Calu3 (cell line): ENCODE measurements at regions of chr12 and their contacts with region 1.

Region 1: DNA sequence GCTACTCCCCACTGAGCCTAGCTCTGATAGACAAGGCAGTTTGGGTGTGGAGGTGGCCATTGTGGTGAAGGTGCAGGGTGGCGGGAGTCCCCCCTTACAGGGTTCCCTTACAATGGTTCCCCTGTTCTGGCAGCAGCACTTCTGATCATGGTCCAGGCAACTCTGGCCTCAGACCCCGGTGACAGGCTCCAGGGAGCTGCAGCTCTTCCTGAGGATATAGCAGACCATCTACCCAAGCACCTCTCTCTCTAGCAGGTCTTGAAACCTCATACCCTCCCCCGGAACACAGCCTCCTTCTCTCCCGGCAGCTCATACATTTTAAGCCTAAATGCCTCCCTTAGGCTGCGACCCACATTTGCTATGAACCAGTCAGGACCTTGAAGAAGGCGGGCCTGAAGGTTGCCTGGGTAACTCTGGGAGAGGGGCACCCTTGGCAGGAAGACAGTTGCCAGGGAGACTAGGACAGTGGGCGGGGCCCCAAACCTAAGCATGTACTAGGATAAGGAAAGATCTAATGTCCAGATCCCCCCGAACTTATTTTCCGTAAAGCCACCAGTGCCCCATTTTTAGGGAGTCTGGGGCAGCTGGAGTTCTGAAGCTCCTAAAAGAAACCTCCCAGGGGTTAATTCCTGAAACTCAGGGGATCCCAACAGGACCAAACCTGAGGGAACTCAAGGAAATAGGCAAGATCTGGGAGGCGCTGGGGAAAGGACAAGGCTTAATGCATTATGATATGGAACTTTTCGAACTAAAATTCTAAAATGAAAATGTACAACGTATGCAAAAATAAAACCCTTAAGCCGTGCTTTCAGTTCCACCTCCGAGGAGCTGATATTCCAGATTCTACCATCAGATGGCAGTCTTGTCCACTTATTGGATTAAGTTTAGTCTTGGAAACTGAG is 4.5 kb upstream of the GDF11 start:
- DNase-seq: peak; percentile 86
- H3K4me3 Mint-ChIP-seq: peak overlapping the region; percentile 68
- H3K27ac Mint-ChIP-seq: peak overlapping the region; percentile 42
- H3K4me1 Mint-ChIP-seq: peaks cover 35% of the 10 kb centered on the region
- H3K27me3 Mint-ChIP-seq: peaks cover 21% of the 10 kb centered on the region
- CTCF ChIP-seq: peak; percentile 55

Region 2: DNA sequence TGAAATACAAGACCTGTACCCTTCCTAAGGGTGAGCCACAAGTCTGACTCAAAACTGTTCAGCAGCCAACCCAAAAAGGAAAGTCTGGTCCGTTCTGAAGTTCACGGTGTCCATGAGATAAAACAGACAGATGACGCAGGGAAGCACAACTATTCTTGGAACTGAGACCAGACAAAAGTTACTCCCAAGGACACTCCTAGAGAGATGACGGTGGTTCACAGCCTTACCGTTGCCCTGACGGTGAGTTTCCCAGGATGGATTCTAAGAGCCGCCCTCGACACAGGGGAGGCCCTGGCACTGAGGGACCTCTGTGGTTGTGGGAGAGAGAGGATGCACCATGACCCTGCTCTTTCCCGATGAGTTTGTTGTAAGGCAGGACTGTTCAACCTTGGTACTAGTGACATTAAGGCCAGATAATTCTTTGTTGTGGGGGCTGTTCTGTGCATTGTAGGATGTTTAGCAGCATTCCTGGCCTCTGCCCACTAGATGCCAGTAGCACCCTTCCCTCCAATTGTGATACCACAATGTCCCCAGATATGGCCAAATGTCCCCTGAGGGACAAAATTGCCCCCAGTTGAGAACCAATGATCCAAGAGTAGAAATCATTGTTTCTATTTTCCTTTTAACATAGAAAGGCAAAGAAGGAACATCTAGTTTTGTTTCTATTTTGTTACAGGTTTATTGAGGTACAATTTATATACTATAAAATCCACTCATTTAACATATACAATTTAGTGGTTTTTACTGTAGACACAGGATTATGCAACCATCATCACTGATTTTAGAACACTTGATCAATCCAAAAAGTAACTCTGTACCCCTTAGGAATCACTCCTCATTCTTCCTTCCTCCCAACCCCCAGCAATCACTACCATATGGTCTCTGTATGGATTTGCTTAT is 78.6 kb before region 1 on chr12:
- CTCF ChIA-PET with region 1: interaction called, 4 read pairs
- intact Hi-C with region 1: loop called (anchors 1 kb)
- DNase-seq: peak; percentile 58
- H3K4me3 Mint-ChIP-seq: no peak overlapping the region
- H3K27ac Mint-ChIP-seq: no peak overlapping the region
- H3K4me1 Mint-ChIP-seq: peaks cover 29% of the 10 kb centered on the region
- H3K27me3 Mint-ChIP-seq: peaks cover 4% of the 10 kb centered on the region
- CTCF ChIP-seq: peak; percentile 53

Region 3: GRCh38 chr12:55715833-55716581 is 22.4 kb before region 1 on chr12 and contains the start of gene BLOC1S1:
- CTCF ChIA-PET with region 1: interaction called, 23 read pairs
- intact Hi-C with region 1: no loop called
- DNase-seq: peak; percentile 98
- H3K4me3 Mint-ChIP-seq: peak within 1 kb of the TSS; percentile 86
- H3K27ac Mint-ChIP-seq: peak within 1 kb of the TSS; percentile 97
- H3K4me1 Mint-ChIP-seq: peaks cover 47% of the 10 kb centered on the region
- H3K27me3 Mint-ChIP-seq: peaks cover 27% of the 10 kb centered on the region
- CTCF ChIP-seq: no peak
- total RNA-seq, gene BLOC1S1: 71.0 and 89.4 TPM in 2 replicates

Region 4: GRCh38 chr12:55797068-55797467 is 58.7 kb after region 1 on chr12:
- CTCF ChIA-PET with region 1: interaction called, 7 read pairs
- intact Hi-C with region 1: loop called (anchors 5 kb)
- DNase-seq: no peak
- H3K4me3 Mint-ChIP-seq: no peak overlapping the region
- H3K27ac Mint-ChIP-seq: no peak overlapping the region
- H3K4me1 Mint-ChIP-seq: peaks cover 10% of the 10 kb centered on the region
- H3K27me3 Mint-ChIP-seq: no peaks in the 10 kb centered on the region
- CTCF ChIP-seq: peak; percentile 22

Region 5: GRCh38 chr12:55926738-55927587 is 188.6 kb after region 1 on chr12:
- CTCF ChIA-PET with region 1: interaction called, 9 read pairs
- intact Hi-C with region 1: loop called (anchors 5 kb)
- DNase-seq: peak; percentile 94
- H3K4me3 Mint-ChIP-seq: peak overlapping the region; percentile 95
- H3K27ac Mint-ChIP-seq: peak overlapping the region; percentile 95
- H3K4me1 Mint-ChIP-seq: peaks cover 34% of the 10 kb centered on the region
- H3K27me3 Mint-ChIP-seq: no peaks in the 10 kb centered on the region
- CTCF ChIP-seq: peak; percentile 93

Region 6: DNA sequence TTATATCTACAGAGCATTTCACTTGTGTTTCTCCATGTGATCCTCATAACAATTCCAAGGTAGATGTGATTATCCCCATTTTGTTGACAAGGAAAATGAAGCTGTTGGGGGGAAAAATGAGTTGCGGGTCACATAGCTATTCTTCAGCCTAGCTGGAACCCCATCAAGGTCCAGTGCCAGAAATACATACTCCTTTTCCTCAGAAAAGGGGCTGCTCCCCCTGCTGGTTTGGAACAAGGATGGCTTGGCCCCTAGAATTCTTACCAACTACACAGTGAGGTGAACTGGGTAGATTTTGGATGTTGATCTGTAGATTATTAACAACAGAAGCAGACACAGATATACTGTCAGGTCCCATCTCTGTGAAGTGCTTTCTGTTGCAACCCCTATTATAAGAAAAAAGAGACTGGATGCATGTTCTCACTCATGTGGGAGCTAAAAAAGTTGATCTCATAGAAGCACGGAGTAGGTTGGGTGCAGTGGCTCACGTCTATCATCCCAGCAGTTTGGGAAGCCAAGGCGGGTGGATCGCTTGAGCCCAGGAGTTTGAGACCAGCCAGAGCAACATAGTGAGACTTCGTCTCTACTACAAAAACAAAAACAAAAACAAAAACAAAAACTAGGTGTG is 291.4 kb after region 1 on chr12:
- CTCF ChIA-PET with region 1: interaction called, 15 read pairs
- intact Hi-C with region 1: loop called (anchors 2 kb)
- DNase-seq: peak; percentile 78
- H3K4me3 Mint-ChIP-seq: no peak overlapping the region
- H3K27ac Mint-ChIP-seq: no peak overlapping the region
- H3K4me1 Mint-ChIP-seq: peaks cover 16% of the 10 kb centered on the region
- H3K27me3 Mint-ChIP-seq: no peaks in the 10 kb centered on the region
- CTCF ChIP-seq: peak; percentile 74

Region 7: GRCh38 chr12:56104109-56104814 is 365.9 kb after region 1 on chr12 and contains the start of gene PA2G4:
- CTCF ChIA-PET with region 1: interaction called, 4 read pairs
- intact Hi-C with region 1: loop called (anchors 5 kb)
- DNase-seq: peak; percentile 99
- H3K4me3 Mint-ChIP-seq: peak within 1 kb of the TSS; percentile 96
- H3K27ac Mint-ChIP-seq: peak within 1 kb of the TSS; percentile 95
- H3K4me1 Mint-ChIP-seq: peaks cover 21% of the 10 kb centered on the region
- H3K27me3 Mint-ChIP-seq: no peaks in the 10 kb centered on the region
- CTCF ChIP-seq: no peak
- total RNA-seq, gene PA2G4: 229 and 233 TPM in 2 replicates

Region 8: DNA sequence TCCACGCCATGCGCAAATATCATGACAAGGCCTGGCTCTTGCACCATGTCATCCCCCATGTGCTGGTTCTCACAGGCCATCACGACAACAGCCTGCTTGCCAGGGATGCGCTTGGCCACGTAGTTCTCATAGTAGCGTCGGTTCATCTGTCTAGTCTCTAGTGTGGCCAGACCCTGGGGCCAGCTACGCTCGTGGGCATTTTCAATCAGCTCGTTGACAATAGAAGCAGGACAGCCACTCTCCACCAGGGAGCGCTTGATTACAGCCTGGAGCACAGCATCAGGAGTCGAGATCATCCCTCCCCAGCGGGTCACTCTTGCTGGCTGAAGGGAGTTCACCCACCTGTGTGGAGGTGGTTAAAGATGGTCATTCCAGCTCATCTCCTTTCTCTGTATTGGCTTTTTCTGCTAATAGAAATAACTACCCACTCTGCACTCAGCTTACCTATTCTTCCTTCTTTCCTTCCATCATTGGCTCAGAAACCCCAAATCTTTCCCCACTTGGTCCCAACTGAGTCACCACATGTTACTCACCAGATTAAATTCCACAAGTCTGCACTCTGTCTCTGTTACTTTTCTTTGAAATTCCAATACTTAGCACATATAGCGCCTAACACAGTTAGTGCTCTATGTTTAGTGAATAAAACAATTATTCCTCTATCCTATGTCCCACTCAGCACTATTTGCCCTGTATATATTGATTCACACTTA is 468.2 kb after region 1 on chr12:
- CTCF ChIA-PET with region 1: no interaction called
- intact Hi-C with region 1: no loop called
- DNase-seq: peak; percentile 58
- H3K4me3 Mint-ChIP-seq: no peak overlapping the region
- H3K27ac Mint-ChIP-seq: no peak overlapping the region
- H3K4me1 Mint-ChIP-seq: no peaks in the 10 kb centered on the region
- H3K27me3 Mint-ChIP-seq: no peaks in the 10 kb centered on the region
- CTCF ChIP-seq: peak; percentile 62